ENCODE measurements at regions of chr11 and their contacts with region 1.

Region 1: DNA sequence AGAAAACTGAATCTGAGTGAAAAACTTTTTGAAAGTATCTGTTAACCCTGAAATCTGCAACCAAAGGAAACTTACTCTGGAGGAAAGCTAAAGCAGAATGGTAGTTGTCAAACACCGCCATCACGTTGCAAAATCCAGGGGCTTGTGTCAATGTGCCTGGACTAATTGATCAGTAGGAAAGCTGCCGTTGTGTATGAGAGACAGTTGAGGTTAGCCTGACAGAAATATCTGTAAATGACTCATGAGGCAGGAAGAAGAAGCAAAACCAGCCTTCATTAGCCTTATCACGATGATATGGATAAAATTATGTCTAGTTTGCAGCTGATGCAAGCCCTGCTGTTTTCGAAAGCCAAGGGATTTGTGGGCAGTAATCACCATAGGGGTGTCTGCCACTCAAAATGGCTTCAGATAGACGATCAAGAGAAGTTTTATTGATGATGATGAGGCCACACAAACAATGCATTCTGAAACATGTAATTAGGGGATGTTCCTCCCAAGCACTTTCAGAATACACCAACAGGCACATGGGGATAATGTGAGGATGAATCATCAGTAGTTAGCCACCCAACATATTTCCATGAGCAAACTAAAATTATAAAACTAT is 8.9 kb downstream of the SCGB1A1 start:
- DNase-seq: no peak
- ATAC-seq: peak; percentile 23
- H3K4me3 Mint-ChIP-seq: peak overlapping the region; percentile 25
- H3K27ac Mint-ChIP-seq: peak overlapping the region; percentile 57
- H3K4me1 Mint-ChIP-seq: peaks cover 24% of the 10 kb centered on the region
- H3K27me3 Mint-ChIP-seq: peaks cover 2% of the 10 kb centered on the region
- CTCF ChIP-seq: no peak

Region 2: GRCh38 chr11:62394825-62395538 is 32.8 kb before region 1 on chr11:
- CTCF ChIA-PET with region 1: interaction called, 17 read pairs
- POLR2A ChIA-PET with region 1: interaction called, 3 read pairs
- intact Hi-C with region 1: no loop called
- DNase-seq: no peak
- ATAC-seq: peak; percentile 79
- H3K4me3 Mint-ChIP-seq: no peak overlapping the region
- H3K27ac Mint-ChIP-seq: no peak overlapping the region
- H3K4me1 Mint-ChIP-seq: no peaks in the 10 kb centered on the region
- H3K27me3 Mint-ChIP-seq: peaks cover 6% of the 10 kb centered on the region
- CTCF ChIP-seq: no peak

Region 3: GRCh38 chr11:62464649-62465048 is 36.9 kb after region 1 on chr11:
- CTCF ChIA-PET with region 1: interaction called, 7 read pairs
- POLR2A ChIA-PET with region 1: interaction called, 3 read pairs
- intact Hi-C with region 1: loop called (anchors 2 kb)
- DNase-seq: no peak
- ATAC-seq: peak; percentile 72
- H3K4me3 Mint-ChIP-seq: no peak overlapping the region
- H3K27ac Mint-ChIP-seq: no peak overlapping the region
- H3K4me1 Mint-ChIP-seq: peaks cover 16% of the 10 kb centered on the region
- H3K27me3 Mint-ChIP-seq: no peaks in the 10 kb centered on the region
- CTCF ChIP-seq: no peak

Region 4: DNA sequence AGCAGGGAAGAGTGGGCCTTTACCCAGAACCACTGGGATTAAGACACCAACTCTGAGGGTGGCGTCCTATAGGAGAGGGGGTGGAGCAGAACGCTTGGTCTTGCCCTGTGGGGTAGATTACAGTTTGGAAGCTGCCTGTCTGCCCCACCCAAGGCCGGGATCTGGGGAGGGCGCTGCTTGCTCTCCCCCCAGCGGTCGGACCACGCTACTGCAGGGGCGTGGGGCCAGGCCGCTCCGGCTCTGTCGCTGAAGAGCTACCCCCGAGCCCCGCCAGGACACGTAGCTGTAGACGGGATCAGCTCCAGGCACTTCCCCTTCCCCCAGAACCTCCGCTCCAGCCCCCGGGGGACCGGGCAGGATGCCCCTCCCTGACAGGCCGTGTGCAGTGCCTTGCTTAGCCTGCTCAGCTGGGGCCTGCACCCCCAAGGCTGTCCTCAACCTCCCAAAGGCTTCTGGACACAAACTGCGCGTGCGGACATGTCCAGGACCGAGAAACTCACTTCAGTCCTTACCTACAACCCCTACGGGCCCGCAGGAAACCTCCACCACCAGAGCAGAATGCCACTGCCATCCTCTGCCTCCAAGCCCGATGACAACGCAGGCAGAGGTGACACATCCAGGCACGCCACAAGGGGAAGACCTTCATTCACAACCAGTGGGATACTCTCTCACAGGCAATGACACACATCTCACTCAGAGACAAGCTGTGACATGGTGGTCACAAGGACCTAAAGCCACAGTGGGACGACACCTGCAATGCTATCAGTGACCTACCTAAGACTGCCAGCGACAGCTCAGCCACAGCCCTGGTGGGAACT is 115.2 kb after region 1 on chr11:
- CTCF ChIA-PET with region 1: interaction called, 159 read pairs
- POLR2A ChIA-PET with region 1: interaction called, 20 read pairs
- intact Hi-C with region 1: loop called (anchors 1 kb)
- DNase-seq: peak; percentile 74
- ATAC-seq: peak; percentile 29
- H3K4me3 Mint-ChIP-seq: peak overlapping the region; percentile 95
- H3K27ac Mint-ChIP-seq: peak overlapping the region; percentile 97
- H3K4me1 Mint-ChIP-seq: peaks cover 78% of the 10 kb centered on the region
- H3K27me3 Mint-ChIP-seq: no peaks in the 10 kb centered on the region
- CTCF ChIP-seq: peak; percentile 78

Region 5: DNA sequence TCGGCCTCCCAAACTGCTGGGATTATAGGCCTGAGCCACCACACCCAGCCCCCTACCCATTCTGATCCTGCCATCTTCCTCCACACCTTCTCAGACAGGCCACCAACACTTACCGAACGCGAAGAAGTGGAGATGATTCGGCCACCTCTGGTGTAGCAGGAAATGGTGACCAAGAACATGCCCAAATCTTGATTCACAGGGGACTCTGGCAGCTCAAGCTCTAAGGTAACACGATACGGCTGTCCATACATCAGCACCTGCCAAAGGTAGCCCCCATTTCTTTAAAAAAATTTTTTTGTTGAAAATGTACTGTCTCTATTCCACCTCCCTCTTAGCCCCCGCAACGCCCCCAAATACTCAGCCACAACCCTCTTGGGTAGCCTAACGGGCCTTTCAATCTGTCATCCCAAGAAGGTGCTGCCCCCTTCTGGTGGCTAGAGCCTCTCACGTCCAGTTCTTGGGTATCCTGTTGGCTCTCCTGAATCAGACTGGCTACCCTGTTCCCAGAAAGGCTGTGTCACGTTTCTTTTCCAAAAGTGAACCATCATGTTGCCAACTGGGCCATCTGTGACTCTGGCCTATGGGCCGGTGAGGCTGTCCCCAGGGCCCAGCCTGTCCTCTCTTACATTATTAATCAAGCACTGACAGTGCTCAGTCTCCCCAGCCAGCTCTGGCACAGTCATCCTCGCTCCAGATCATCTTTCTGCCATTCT is 266.9 kb after region 1 on chr11:
- CTCF ChIA-PET with region 1: interaction called, 37 read pairs
- POLR2A ChIA-PET with region 1: interaction called, 3 read pairs
- intact Hi-C with region 1: loop called (anchors 1 kb)
- DNase-seq: peak; percentile 55
- ATAC-seq: peak; percentile 88
- H3K4me3 Mint-ChIP-seq: no peak overlapping the region
- H3K27ac Mint-ChIP-seq: no peak overlapping the region
- H3K4me1 Mint-ChIP-seq: peaks cover 5% of the 10 kb centered on the region
- H3K27me3 Mint-ChIP-seq: no peaks in the 10 kb centered on the region
- CTCF ChIP-seq: no peak

Region 6: DNA sequence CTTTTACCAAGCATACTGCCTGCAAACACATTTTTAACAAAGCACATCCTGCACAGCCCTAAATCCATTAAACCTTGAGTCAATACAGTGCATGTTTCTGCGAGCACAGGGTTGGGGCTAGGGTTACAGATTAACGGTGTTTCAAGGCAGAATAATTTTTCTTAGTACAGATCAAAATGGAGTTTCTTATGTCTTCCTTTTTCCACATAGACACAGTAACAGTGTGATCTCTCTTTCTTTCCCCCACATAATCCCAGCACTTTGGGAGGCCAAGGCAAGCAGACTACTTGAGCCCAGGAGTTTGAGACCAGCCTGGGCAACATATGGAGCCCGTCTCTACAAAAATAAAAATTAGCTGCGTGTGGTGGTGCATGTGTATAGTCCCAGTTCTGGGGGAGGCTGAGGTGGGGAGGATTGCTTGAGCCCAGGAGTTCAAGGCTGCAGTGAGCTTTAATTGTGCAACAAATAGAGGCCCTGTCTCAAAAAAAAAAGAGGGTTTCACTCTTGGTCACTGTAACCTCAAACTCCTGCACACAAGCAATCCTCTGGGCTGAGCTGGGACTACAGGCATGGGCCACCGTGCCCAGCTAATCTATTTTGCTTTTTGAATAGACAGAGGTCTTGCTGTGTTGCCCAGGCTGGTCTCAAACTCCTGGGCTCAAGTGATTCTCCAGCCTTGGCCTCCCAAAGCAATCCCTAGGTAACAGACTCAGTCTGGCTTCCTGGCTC is 433.3 kb after region 1 on chr11:
- CTCF ChIA-PET with region 1: interaction called, 11 read pairs
- POLR2A ChIA-PET with region 1: no interaction called
- intact Hi-C with region 1: no loop called
- DNase-seq: no peak
- ATAC-seq: no peak
- H3K4me3 Mint-ChIP-seq: no peak overlapping the region
- H3K27ac Mint-ChIP-seq: no peak overlapping the region
- H3K4me1 Mint-ChIP-seq: peaks cover 24% of the 10 kb centered on the region
- H3K27me3 Mint-ChIP-seq: no peaks in the 10 kb centered on the region
- CTCF ChIP-seq: no peak